A673 (cell line): ENCODE measurements at regions of chr1 and their contacts with region 1.

Region 1: DNA sequence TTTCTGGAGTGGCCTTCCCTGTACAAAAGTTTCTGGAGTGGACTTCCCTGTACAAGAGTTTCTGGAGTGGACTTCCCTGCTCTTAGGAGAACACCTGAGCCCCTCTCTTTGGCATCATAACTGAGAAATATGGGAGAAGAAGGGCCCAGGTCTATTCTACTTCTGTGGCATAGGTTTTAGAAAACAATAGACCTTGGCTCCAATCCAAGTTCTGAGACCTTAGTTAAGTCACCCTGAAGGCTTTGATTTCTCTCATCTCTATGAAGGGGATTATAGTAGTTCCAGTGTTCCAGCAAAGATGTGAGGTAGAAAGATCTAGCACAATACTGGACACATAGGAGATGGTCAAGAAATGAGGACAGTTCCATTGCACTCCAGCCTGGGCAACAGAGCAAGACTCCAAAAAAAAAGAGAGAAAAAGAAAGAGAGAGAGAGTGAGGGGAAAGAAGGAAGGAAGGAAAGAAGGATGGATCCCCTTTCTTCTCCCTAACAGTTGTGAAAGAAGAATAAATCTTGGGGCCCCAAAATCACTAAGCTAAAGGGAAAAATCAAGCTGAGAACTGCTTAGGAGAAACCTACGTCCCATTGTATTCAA is 13.3 kb upstream of the EIF4G3 start:
- DNase-seq: no peak
- H3K4me3 ChIP-seq: no peak overlapping the region
- H3K27ac ChIP-seq: no peak overlapping the region
- H3K4me1 ChIP-seq: no peaks in the 10 kb centered on the region
- H3K27me3 ChIP-seq: no peaks in the 10 kb centered on the region
- CTCF ChIP-seq: no peak

Region 2: GRCh38 chr1:20775700-20776099 is 414.3 kb before region 1 on chr1:
- CTCF ChIA-PET with region 1: no interaction called
- POLR2A ChIA-PET with region 1: no interaction called
- intact Hi-C with region 1: loop called (anchors 10 kb)
- DNase-seq: no peak
- H3K4me3 ChIP-seq: no peak overlapping the region
- H3K27ac ChIP-seq: no peak overlapping the region
- H3K4me1 ChIP-seq: no peaks in the 10 kb centered on the region
- H3K27me3 ChIP-seq: no peaks in the 10 kb centered on the region
- CTCF ChIP-seq: no peak